G401 (cell line): ENCODE measurements at regions of chr18 and their contacts with region 1.

Region 1: DNA sequence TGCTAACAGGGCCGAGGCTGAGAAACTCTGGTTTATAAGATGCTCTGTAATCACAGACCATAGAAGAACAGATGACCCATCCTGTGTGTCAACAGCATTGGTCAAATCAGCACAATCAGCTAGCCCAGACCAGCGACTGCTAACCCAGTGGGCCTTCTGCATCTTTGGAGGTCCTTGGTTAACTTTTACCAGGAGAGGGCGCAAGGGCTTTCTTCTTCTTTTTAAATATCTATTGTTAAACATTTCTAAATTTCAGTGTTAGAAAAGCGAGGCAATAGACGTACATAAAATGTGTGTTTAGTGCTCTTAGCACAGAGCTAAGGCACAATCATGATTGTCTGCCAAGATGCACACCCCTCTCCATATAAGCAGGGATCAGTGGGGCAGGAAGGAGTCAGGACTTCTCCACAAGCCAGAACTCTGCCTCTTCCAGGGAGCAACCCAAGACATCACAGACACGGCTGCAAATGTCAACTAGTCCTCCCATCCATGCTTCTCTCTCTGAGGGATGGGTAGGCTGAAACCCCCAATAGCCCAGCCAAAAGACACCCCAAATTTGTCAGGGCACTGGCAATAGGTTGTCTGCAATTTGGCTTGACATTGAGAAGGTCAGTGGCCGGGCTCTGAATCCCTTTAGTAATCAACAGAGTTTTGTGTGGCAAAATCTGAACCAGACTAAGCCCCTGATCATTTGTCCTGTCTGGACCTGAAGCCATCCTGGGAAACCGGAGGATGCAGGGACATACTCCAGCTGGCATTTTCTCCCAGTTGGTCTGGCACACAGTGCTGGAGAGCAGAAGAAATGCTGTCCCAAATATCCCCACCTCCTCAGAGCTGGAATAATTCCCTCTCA is 188.2 kb downstream of the BCL2 start:
- DNase-seq: peak; percentile 41

Region 2: DNA sequence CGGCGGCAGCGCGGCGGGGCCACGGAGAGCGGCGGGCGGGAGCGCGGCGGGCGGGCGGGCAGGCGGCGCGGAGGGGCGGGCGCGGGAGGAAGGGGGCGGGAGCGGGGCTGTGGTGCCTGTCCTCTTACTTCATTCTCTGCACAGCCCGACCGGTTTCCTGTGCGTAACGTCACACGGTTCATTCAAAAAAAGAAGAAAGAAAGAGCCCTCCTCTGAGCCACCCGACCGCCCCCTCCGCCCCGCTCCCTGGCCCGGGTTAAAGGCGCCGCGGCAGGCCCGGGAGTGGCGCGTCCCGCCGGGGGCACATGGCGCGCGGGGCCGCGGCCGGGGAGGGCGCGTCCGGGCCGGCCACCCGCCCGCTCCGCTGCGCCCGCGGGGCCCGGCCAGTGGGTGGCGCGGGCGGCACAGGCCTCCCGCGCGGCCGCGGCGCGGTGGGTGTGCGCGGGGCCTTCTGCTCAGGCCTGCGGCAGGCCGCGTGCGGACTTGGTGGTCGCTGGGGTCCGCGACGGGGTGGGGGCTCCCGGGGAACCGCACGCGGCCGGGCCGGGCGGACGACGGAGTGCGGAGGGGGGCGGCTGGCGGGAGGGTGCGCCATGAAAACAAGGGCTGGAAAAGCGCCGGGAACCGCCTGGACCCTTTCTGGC is 188.8 kb after region 1 on chr18:
- in situ Hi-C with region 1: loop called (anchors 25 kb)
- DNase-seq: peak; percentile 81